Activated CD8-positive, alpha-beta T cell treated with anti-CD3 and anti-CD28 coated beads, Interleukin-2, amount 10 ng/mL, durations not matched to agents 7 days and 5 days (primary cell): ENCODE measurements at regions of chr3 and their contacts with region 1.

Region 1: DNA sequence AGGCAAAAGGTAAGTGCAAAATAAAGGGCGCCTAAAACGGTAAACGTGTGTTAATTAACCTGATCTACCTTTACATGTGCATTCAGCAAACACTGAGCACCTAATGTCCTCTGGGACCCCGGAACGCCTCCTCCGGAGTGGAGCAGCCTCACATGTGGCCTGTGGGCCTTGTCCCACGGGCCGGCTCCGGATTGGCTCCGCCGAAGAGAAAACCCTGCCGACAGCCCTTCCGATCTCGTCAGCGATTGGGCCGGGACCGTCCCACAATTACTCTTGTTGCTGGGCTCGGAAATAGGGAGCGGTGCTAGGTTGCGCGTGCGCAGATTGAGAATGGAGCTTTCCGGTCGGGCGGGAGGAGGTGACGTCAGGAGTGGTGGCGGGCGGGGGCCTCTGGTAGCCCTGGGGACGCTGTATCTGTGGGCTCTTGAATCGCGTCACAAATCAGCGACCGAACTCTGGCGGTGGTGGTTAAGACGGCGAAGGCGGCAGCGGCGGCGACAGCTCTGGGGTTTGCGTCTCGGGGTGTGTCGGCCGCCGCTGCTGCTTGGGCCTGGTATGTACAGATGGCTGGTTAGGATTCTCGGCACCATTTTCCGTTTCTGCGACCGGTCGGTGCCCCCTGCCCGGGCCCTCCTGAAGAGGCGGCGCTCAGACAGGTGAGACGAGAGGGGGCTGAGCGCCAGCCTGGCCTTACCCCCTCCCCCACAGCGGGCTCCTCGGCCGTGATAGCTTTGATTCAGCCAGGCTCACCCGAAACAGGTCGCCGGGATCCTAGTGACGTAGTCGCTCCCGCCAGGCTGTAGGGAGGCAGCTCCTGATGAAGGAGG is at the start of gene SENP2:
- DNase-seq: peak; percentile 100
- ATAC-seq: peak; percentile 98
- H3K4me3 Mint-ChIP-seq: peak within 1 kb of the TSS; percentile 80
- H3K27ac Mint-ChIP-seq: peak within 1 kb of the TSS; percentile 91
- H3K4me1 Mint-ChIP-seq: peaks cover 32% of the 10 kb centered on the region
- H3K27me3 Mint-ChIP-seq: no peaks in the 10 kb centered on the region
- total RNA-seq, gene SENP2: 27.5 to 28.9 TPM

Region 2: GRCh38 chr3:185498503-185499396 is 87.3 kb before region 1 on chr3 and contains the start of gene TMEM41A:
- CTCF ChIA-PET with region 1: no interaction called
- POLR2A ChIA-PET with region 1: interaction called, 12 read pairs
- DNase-seq: peak; percentile 93
- ATAC-seq: peak; percentile 99
- H3K4me3 Mint-ChIP-seq: peak within 1 kb of the TSS; percentile 96
- H3K27ac Mint-ChIP-seq: peak within 1 kb of the TSS; percentile 92
- H3K4me1 Mint-ChIP-seq: peaks cover 18% of the 10 kb centered on the region
- H3K27me3 Mint-ChIP-seq: peaks cover 7% of the 10 kb centered on the region
- total RNA-seq, gene TMEM41A: 20.3 to 21.6 TPM

Region 3: DNA sequence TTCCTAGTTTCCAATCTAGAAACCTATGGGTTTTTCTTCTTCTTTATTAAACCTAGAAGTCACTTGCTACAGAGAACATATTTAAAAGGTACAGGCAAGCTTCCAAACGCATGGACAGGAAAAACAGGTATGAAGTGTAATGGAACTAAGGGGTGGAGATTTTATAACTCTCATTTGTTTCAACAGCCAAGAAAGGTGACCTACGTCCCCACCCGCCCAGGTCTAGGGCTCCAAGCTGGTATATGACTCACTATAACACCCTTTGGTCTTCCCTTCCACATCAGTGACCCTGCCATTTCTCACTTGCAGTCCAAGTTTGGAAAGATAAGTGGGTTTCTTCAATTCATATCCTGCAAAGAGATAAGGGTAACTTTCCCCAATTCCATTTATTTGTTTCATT is 27.7 kb before region 1 on chr3:
- CTCF ChIA-PET with region 1: interaction called, 10 read pairs
- POLR2A ChIA-PET with region 1: interaction called, 3 read pairs
- DNase-seq: no peak
- ATAC-seq: no peak
- H3K4me3 Mint-ChIP-seq: no peak overlapping the region
- H3K27ac Mint-ChIP-seq: no peak overlapping the region
- H3K4me1 Mint-ChIP-seq: peaks cover 17% of the 10 kb centered on the region
- H3K27me3 Mint-ChIP-seq: peaks cover under 1% of the 10 kb centered on the region

Region 4: DNA sequence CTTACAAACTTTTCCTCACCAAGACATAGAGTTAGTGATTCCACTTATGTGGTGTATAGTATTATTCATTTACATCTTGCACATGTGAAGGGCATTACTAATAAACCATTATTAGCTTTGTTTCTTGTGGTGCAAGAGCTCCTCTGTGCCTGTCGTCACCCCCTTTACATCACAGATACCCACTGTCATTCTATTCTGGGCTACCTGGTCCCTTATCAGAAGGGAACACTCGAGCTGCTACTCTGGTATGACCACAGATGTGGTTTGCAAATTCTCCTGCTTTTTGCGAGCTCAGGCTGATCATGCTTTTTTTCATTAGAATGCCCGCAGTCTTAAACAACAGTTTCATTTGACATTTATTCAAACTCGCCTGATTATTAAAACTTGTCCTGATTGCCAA is 13.9 kb before region 1 on chr3:
- CTCF ChIA-PET with region 1: interaction called, 38 read pairs
- POLR2A ChIA-PET with region 1: interaction called, 5 read pairs
- DNase-seq: no peak
- ATAC-seq: no peak
- H3K4me3 Mint-ChIP-seq: no peak overlapping the region
- H3K27ac Mint-ChIP-seq: no peak overlapping the region
- H3K4me1 Mint-ChIP-seq: peaks cover 8% of the 10 kb centered on the region
- H3K27me3 Mint-ChIP-seq: no peaks in the 10 kb centered on the region

Region 5: GRCh38 chr3:185900226-185900625 is 314.2 kb after region 1 on chr3:
- CTCF ChIA-PET with region 1: no interaction called
- POLR2A ChIA-PET with region 1: no interaction called
- DNase-seq: no peak
- ATAC-seq: no peak
- H3K4me3 Mint-ChIP-seq: no peak overlapping the region
- H3K27ac Mint-ChIP-seq: no peak overlapping the region
- H3K4me1 Mint-ChIP-seq: no peaks in the 10 kb centered on the region
- H3K27me3 Mint-ChIP-seq: peaks cover 8% of the 10 kb centered on the region

Region 6: GRCh38 chr3:186185194-186185787 is 599.2 kb after region 1 on chr3:
- CTCF ChIA-PET with region 1: no interaction called
- POLR2A ChIA-PET with region 1: no interaction called
- DNase-seq: peak; percentile 59
- ATAC-seq: peak; percentile 83
- H3K4me3 Mint-ChIP-seq: peak overlapping the region; percentile 4
- H3K27ac Mint-ChIP-seq: peak overlapping the region; percentile 74
- H3K4me1 Mint-ChIP-seq: peaks cover 24% of the 10 kb centered on the region
- H3K27me3 Mint-ChIP-seq: peaks cover 23% of the 10 kb centered on the region